ENCODE measurements at regions of chr3 and their contacts with region 1.

Region 1: GRCh38 chr3:52536369-52537164 is at the start of gene UQCC5:
- DNase-seq: peak; percentile 99
- H3K4me3 ChIP-seq: peak within 1 kb of the TSS; percentile 52 to 87 (median 59)
- H3K27ac ChIP-seq: peak within 1 kb of the TSS; percentile 73
- H3K4me1 ChIP-seq: peaks cover 37% of the 10 kb centered on the region
- H3K27me3 ChIP-seq: no peaks in the 10 kb centered on the region
- CTCF ChIP-seq: no peak
- total RNA-seq, gene UQCC5: 1.8 to 27.7 TPM

Region 2: GRCh38 chr3:52455283-52456168 is 81.0 kb before region 1 on chr3 and contains the start of gene NISCH:
- CTCF ChIA-PET with region 1: no interaction called
- dilution Hi-C with region 1: no loop called
- in situ Hi-C with region 1: no loop called
- intact Hi-C with region 1: loop called (anchors 5 kb)
- DNase-seq: peak; percentile 67
- H3K4me3 ChIP-seq: peak within 1 kb of the TSS; percentile 60 to 80 (median 78)
- H3K27ac ChIP-seq: peak within 1 kb of the TSS; percentile 30
- H3K4me1 ChIP-seq: peaks cover 39% of the 10 kb centered on the region
- H3K27me3 ChIP-seq: no peaks in the 10 kb centered on the region
- CTCF ChIP-seq: no peak
- total RNA-seq, gene NISCH: 79.7 to 123 TPM

Region 3: DNA sequence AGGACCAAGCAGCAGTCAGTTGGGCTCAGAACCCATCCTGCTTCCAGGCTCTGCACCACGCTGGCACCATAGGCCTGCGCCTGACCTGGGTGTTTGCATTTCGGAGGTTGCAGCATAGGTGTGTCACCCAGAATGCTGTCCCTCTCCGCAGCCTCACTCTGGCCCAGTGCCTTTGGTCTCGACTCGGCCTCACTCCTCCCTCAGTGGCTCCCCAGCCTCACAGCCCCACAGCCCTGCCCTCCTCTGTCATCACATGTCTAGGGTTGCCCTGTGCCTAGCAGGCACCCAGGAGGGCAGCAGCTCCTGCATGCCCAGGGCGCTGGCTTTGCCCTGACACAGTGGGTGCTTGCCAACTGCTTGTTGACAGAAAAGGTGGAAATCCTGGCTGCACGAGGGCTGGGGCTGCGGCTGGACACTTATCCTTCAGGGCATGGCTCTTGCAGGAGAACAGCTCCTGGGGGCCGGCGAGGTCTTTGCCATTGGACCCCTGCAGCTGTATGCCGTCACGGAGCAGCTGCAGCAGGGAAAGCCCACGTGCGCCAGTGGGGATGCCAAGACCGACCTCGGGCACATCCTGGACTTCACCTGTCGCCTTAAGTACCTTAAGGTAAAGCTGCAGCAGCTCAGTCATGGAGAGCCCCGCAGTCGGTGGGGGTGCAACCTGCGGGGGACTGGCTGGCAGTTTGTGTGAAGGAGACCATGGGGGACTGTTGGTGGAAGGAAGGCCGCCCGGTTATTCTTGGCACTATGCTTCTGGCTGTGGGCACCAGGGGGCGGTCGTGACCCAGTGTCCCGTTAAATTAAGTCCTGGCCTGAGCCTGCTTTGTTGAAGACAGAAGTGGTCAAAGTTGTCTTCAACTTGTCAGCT is 65.0 kb before region 1 on chr3:
- CTCF ChIA-PET with region 1: no interaction called
- dilution Hi-C with region 1: no loop called
- in situ Hi-C with region 1: no loop called
- intact Hi-C with region 1: loop called (anchors 5 kb)
- DNase-seq: no peak
- H3K4me3 ChIP-seq: no peak overlapping the region
- H3K27ac ChIP-seq: no peak overlapping the region
- H3K4me1 ChIP-seq: peaks cover 16% of the 10 kb centered on the region
- H3K27me3 ChIP-seq: no peaks in the 10 kb centered on the region
- CTCF ChIP-seq: peak; percentile 65 to 70

Region 4: GRCh38 chr3:52481819-52482521 is 54.6 kb before region 1 on chr3:
- CTCF ChIA-PET with region 1: no interaction called
- dilution Hi-C with region 1: loop called (anchors 5 kb)
- in situ Hi-C with region 1: no loop called
- intact Hi-C with region 1: no loop called
- DNase-seq: no peak
- H3K4me3 ChIP-seq: no peak overlapping the region
- H3K27ac ChIP-seq: no peak overlapping the region
- H3K4me1 ChIP-seq: peaks cover 25% of the 10 kb centered on the region
- H3K27me3 ChIP-seq: no peaks in the 10 kb centered on the region
- CTCF ChIP-seq: peak; percentile 35 to 50

Region 5: GRCh38 chr3:52636673-52637072 is 100.1 kb after region 1 on chr3:
- CTCF ChIA-PET with region 1: no interaction called
- dilution Hi-C with region 1: no loop called
- in situ Hi-C with region 1: no loop called
- intact Hi-C with region 1: no loop called
- DNase-seq: peak; percentile 76
- H3K4me3 ChIP-seq: no peak overlapping the region
- H3K27ac ChIP-seq: no peak overlapping the region
- H3K4me1 ChIP-seq: peaks cover 6% of the 10 kb centered on the region
- H3K27me3 ChIP-seq: no peaks in the 10 kb centered on the region
- CTCF ChIP-seq: no peak